AG04450 (cell line): ENCODE measurements at regions of chr1 and their contacts with region 1.

Region 1: DNA sequence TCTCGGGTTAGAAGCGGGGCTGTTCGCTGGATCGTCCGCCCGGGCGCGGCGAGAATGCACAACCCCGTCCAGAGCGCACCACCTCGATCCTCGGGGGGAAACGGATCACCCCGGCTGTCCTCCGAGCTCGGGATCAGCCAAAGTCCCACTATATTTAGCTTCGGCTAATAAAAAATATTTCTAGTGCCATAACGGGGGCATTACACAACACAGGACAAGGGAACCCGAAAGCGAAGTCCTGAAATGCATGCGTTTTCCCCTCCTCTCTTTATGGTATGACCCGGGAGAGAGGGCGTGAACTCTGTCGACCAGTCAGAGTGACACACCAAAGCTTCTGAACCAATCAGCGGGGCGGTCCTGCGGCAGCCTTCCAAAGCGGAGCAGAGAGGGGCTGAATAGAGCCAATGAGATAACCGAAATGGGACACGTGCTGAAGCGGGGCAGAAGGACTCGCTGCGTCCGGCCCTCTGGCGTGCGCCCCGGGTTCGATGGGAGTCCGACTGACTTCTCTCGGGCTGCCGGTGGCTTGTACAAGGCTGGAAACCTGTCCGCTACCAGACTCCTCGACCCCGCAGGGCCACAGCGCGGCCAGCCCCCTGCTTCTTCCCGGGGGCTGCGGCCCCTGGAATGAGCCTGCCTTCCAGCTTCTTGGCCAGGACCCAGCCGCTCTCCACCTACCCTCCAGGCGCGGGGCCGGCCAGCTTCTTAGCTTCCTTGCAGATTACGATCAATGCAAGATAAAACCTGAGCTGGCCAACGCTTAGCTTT is at the start of gene ALDH4A1:
- DNase-seq: peak; percentile 95
- H3K4me3 ChIP-seq: peak within 1 kb of the TSS; percentile 90
- H3K27ac ChIP-seq: peak within 1 kb of the TSS; percentile 92
- H3K27me3 ChIP-seq: no peaks in the 10 kb centered on the region
- CTCF ChIP-seq: no peak
- polyA plus RNA-seq, gene ALDH4A1: 8.8 and 14.7 TPM in 2 replicates

Region 2: GRCh38 chr1:18819986-18820790 is 82.5 kb before region 1 on chr1:
- CTCF ChIA-PET with region 1: no interaction called
- POLR2A ChIA-PET with region 1: no interaction called
- DNase-seq: no peak
- H3K4me3 ChIP-seq: no peak overlapping the region
- H3K27ac ChIP-seq: no peak overlapping the region
- H3K27me3 ChIP-seq: peaks cover 4% of the 10 kb centered on the region
- CTCF ChIP-seq: no peak

Region 3: DNA sequence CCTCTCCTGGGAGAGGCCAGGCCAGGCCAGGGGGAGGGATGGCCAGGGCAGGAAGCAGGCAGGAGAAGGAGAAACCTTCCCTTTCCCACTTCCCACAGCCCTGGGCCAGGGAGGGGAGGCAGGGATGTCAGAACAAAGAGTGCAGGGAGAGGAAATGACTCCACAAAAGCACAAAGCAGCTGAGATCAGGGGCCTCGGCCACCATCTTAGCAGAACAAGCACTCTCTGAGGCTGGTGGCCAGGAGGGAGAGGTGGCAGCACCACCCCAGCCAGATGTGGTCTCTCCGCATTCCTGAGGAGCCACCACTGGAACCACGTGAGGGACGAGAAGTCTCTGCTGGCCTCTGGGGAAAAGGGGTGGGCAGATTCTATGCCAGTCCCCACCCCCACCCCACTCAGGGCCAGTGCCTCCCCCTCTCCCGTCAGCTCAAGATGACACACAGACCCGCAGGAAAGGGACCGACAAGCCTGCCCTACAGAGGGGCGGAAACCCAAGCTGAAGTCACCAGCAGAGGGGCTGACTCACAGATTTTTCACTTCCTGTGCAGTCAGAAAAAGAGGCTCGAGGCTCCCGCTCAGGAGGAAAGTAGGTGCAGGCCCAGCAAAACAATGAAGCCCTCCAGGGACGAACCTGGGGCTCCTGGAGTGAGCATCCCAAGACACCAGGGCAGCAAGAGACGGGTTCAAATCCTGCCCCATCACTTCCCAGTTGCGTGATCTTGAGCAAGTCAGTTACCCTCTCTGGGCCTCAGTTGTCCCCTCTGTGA is 23.8 kb after region 1 on chr1:
- CTCF ChIA-PET with region 1: interaction called, 13 read pairs
- POLR2A ChIA-PET with region 1: interaction called, 3 read pairs
- DNase-seq: peak; percentile 71
- H3K4me3 ChIP-seq: peak overlapping the region; percentile 32
- H3K27ac ChIP-seq: peak overlapping the region; percentile 96
- H3K27me3 ChIP-seq: no peaks in the 10 kb centered on the region
- CTCF ChIP-seq: no peak

Region 4: DNA sequence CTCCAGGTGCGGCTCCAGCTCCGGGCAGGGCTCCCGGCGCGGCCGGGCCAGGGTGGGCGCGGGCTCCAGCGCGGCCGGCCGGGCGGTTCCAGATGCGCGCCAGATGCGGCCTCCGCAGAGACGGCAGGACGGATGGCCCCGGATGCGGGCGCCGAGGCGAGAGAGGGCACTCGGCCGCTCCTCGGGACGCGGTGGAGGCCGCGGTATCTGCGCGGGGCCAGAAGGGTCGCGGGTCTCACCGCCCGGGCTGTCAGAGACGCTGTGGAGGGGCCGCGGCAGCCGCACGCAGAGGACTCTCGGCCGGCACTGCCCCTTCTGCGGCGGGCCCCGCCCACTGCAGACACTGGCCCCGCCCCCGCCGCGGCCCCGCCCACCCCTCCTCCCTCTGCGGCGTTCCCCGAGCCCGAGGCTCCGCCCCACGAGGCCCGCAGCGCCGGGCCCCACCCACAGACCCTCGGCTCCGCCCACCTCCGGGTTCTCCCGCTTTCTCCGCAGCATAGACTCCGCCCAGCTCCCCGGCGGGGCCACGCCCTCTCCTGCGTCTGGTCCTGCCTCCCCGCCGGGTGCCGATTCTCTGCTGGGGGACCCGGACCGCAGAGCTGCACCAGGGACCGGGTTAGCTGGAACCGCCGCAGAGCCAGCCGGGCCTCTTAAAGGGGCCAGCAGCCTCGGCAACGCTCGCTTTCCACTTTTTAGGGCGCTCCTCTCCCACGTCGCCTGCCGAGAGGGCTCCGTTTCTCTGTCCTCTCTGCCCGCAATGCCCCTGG is 53.8 kb after region 1 on chr1 and contains the start of gene IFFO2:
- CTCF ChIA-PET with region 1: interaction called, 16 read pairs
- POLR2A ChIA-PET with region 1: interaction called, 3 read pairs
- DNase-seq: peak; percentile 81
- H3K4me3 ChIP-seq: peak within 1 kb of the TSS; percentile 73
- H3K27ac ChIP-seq: peak within 1 kb of the TSS; percentile 21
- H3K27me3 ChIP-seq: peaks cover 11% of the 10 kb centered on the region
- CTCF ChIP-seq: no peak
- polyA plus RNA-seq, gene IFFO2: 6.8 and 7.8 TPM in 2 replicates

Region 5: DNA sequence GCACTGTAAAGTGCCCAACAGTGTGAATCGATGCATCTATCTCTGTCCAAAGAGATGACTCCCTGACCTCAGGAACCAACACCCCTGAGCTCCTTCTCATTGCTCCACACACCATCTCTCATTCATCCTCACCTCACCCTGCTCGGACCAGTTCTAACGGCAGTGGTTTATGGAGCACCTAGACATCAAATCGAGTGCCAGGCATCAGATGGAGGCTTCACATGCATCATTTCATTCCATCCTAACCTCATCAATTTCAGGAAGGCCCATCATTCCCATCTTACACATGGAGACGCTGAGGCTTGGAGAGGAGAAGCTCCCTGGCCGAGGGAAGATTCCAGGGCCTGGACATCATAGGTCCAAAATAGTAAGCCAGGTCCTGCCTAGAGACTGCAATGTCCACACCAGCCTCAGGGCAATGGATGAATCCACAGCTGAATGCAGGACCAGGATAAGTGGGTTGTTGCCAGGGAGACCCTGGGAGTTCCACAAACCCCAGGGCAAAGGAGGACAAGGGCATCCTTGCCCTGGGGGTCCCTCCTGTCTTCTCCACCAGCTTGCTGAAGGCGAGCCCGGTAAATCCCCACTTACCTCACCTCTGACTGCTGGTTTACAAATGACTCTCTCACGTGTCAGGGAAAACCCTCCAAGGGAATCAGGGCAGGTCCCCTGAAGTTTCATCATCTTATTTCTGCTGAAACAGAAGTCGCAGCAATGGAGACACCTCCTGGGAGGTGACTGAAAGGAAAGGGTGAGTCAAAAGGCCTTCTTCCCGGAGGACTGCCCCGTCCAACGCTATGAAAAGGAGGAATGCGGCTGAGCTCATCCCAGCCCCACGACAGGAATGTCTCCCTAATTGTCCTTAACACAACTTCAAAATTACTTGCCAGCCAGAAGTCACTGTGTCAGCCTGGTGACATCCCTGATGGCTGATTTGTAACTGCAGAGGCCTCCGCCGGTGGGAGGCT is 62.8 kb after region 1 on chr1:
- CTCF ChIA-PET with region 1: interaction called, 17 read pairs
- POLR2A ChIA-PET with region 1: no interaction called
- DNase-seq: no peak
- H3K4me3 ChIP-seq: no peak overlapping the region
- H3K27ac ChIP-seq: peak overlapping the region; percentile 21
- H3K27me3 ChIP-seq: peaks cover 2% of the 10 kb centered on the region
- CTCF ChIP-seq: no peak

Region 6: GRCh38 chr1:19010995-19011844 is 108.5 kb after region 1 on chr1:
- CTCF ChIA-PET with region 1: interaction called, 13 read pairs
- POLR2A ChIA-PET with region 1: no interaction called
- DNase-seq: peak; percentile 92
- H3K4me3 ChIP-seq: no peak overlapping the region
- H3K27ac ChIP-seq: peak overlapping the region; percentile 92
- H3K27me3 ChIP-seq: no peaks in the 10 kb centered on the region
- CTCF ChIP-seq: no peak

Region 7: DNA sequence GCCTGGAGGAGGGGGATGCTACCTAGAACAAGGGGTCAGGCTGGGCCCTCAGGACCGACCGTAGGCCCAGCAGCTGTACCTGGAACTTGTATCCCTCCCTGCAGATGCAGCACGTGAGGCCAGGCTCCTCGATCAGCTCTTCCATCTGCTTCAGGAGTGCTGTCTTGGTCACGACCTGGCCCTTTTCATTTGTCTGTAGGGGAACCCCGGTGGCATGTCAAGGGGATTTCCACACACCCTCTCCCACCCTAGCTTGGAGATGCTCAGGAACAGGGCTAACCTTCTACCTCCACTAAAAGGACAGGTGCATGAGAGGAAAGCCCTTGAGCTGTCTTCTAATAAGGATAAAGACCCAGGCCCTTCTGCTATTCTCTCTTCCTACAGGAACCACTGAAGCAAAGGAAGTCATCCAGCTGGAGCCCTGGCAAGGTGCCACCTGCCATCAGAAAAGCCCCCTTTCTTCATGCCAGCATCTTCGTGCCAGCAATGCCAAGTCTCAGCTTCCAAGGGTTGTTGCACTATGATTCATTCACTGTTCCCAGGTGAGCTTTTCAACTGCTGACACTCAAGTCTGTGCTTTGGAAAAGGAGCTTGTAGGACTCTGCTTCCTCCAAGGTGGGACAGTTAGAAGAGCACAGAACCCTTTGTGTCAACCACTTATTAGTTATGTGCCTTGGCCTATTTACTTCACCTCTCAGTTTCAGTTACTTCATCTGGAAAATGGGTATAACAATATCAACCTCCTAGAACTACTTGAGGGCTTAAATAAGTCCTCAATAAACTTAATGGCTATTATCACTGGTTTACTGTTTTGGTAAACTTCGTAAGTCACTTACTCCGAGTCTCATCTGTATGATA is 185.3 kb after region 1 on chr1:
- CTCF ChIA-PET with region 1: interaction called, 25 read pairs
- POLR2A ChIA-PET with region 1: interaction called, 3 read pairs
- DNase-seq: no peak
- H3K4me3 ChIP-seq: no peak overlapping the region
- H3K27ac ChIP-seq: peak overlapping the region; percentile 41
- H3K27me3 ChIP-seq: no peaks in the 10 kb centered on the region
- CTCF ChIP-seq: no peak

Region 8: DNA sequence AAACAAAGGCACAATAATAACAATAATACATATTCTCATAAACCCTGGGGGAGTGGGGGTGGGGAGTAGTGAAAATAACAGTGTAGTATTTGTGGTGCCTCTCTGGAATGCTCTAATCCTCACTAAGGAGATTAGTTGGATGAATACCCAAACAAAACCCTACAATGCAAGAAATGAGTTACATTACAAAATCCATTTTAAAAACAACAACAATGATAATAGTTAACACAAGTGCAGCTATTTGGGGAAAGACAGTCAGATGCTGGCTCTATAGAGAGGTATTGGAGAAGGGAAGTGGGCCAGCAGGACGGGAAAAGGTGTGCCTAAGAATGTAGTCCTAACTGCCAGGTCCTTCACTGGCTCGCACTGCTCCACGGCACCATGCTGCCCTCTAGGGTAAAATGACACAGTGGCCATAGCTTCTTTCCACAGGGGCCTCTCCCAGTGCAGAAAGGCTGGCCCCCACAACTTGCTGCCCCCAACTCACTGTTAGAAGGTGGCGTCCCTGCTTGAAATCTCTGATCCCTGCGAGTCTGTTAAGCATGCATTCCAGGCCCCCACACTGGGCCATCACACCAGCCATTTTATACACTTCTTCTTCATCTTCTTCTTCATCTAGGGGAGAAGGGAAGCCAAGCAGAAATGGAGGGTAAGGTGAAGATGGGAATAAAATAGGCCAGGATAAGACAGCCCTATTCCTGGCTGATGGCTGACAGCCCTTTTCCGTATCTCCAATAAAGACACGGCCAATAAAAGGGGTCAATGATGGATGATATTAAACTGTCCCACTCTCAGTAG is 193.5 kb after region 1 on chr1:
- CTCF ChIA-PET with region 1: interaction called, 11 read pairs
- POLR2A ChIA-PET with region 1: interaction called, 3 read pairs
- DNase-seq: no peak
- H3K4me3 ChIP-seq: no peak overlapping the region
- H3K27ac ChIP-seq: no peak overlapping the region
- H3K27me3 ChIP-seq: no peaks in the 10 kb centered on the region
- CTCF ChIP-seq: peak; percentile 35; the same call in 1 of the 2 replicates